Activated CD4-positive, alpha-beta memory T cell treated with anti-CD3 and anti-CD28 coated beads, Interleukin-2, amount 10 ng/mL, durations not matched to agents 7 days and 5 days (primary cell): ENCODE measurements at regions of chr12 and their contacts with region 1.

Region 1: GRCh38 chr12:810671-811415 is 58.5 kb downstream of the WNK1 start:
- DNase-seq: peak; percentile 55
- H3K4me3 Mint-ChIP-seq: peak overlapping the region; percentile 25
- H3K27ac Mint-ChIP-seq: peak overlapping the region; percentile 49
- H3K4me1 Mint-ChIP-seq: peaks cover 66% of the 10 kb centered on the region
- H3K27me3 Mint-ChIP-seq: no peaks in the 10 kb centered on the region

Region 2: DNA sequence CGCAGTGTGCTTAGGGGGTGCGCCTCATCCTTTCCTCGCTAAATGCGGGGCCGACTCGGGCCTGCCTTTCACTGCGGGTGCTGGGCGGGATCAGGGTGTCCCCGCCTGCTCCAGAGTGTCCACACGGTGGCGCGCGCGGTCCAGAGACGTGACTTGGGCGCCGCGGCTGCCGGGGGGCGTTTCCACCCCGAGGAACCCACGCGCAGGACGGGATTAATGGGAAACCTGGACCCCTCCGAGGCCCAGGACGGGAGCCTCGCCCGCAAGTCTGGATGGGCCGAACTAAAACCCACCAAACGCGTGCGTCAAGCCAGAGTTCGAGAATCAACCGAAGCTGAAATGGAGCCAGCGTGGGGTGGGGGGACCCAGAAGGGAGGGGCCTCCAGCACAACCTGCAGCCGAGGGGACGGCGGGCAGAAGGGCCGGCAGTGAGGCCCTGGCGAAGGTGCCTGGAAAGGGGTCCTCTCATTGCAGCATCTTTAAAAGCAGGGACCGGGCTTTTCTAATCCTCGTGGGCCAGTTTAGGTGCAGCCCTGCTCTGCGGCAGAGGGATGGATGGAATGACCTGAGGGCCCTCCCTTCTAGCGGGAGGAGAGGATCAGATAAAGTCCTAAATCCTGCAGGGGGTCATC is 240.9 kb before region 1 on chr12:
- CTCF ChIA-PET with region 1: interaction called, 77 read pairs
- POLR2A ChIA-PET with region 1: interaction called, 5 read pairs
- DNase-seq: peak; percentile 87
- H3K4me3 Mint-ChIP-seq: peak overlapping the region; percentile 78
- H3K27ac Mint-ChIP-seq: peak overlapping the region; percentile 10
- H3K4me1 Mint-ChIP-seq: peaks cover 78% of the 10 kb centered on the region
- H3K27me3 Mint-ChIP-seq: no peaks in the 10 kb centered on the region

Region 3: GRCh38 chr12:614411-614970 is 196.4 kb before region 1 on chr12:
- CTCF ChIA-PET with region 1: interaction called, 13 read pairs
- POLR2A ChIA-PET with region 1: interaction called, 3 read pairs
- DNase-seq: no peak
- H3K4me3 Mint-ChIP-seq: no peak overlapping the region
- H3K27ac Mint-ChIP-seq: no peak overlapping the region
- H3K4me1 Mint-ChIP-seq: peaks cover 50% of the 10 kb centered on the region
- H3K27me3 Mint-ChIP-seq: no peaks in the 10 kb centered on the region

Region 4: GRCh38 chr12:724194-724855 is 86.5 kb before region 1 on chr12:
- CTCF ChIA-PET with region 1: no interaction called
- POLR2A ChIA-PET with region 1: no interaction called
- DNase-seq: peak; percentile 30
- H3K4me3 Mint-ChIP-seq: peak overlapping the region; percentile 33
- H3K27ac Mint-ChIP-seq: peak overlapping the region; percentile 58
- H3K4me1 Mint-ChIP-seq: peaks cover 62% of the 10 kb centered on the region
- H3K27me3 Mint-ChIP-seq: no peaks in the 10 kb centered on the region

Region 5: DNA sequence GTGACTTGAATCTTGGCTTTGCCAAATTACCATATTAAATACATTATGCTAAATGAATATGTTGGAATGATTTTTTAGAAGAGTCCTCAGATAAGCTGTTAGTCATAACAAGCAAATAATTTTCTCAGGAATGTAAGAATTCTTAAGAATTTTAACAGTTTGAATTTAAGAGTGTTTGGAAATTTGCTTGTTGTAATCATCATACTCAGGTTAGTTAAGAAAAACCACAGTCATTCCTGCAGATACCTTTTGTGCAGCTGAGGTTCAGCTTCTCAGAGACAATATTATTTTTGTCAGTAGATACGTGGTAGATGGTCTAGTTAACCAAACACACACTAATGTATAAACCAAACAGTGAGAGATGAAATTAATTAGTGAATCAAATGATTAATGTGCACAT is 49.6 kb before region 1 on chr12:
- CTCF ChIA-PET with region 1: interaction called, 13 read pairs
- POLR2A ChIA-PET with region 1: interaction called, 3 read pairs
- DNase-seq: no peak
- H3K4me3 Mint-ChIP-seq: no peak overlapping the region
- H3K27ac Mint-ChIP-seq: no peak overlapping the region
- H3K4me1 Mint-ChIP-seq: peaks cover 59% of the 10 kb centered on the region
- H3K27me3 Mint-ChIP-seq: no peaks in the 10 kb centered on the region

Region 6: GRCh38 chr12:779745-780734 is 30.8 kb before region 1 on chr12:
- CTCF ChIA-PET with region 1: interaction called, 11 read pairs
- POLR2A ChIA-PET with region 1: interaction called, 3 read pairs
- DNase-seq: no peak
- H3K4me3 Mint-ChIP-seq: peak overlapping the region; percentile 65
- H3K27ac Mint-ChIP-seq: peak overlapping the region; percentile 41
- H3K4me1 Mint-ChIP-seq: peaks cover 61% of the 10 kb centered on the region
- H3K27me3 Mint-ChIP-seq: no peaks in the 10 kb centered on the region

Region 7: DNA sequence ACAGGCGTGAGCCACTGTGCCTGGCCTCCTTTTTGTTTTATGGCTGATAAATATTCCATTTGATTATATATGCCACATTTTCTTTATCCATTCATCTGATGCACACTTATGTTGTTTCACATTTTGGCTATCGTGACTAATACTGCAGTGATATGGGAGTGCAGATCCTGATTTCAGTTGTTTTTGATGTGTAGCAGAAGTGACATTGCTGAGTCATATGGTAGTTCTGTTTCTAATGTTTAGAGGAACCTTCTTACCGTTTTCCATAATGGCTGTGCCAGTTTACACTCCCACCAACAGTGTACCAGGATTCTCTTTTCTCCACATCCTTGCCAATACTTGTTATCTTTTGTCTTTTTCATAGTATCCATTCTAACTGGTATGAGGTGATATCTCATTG is 416.1 kb after region 1 on chr12:
- CTCF ChIA-PET with region 1: no interaction called
- POLR2A ChIA-PET with region 1: no interaction called
- DNase-seq: no peak
- H3K4me3 Mint-ChIP-seq: no peak overlapping the region
- H3K27ac Mint-ChIP-seq: no peak overlapping the region
- H3K4me1 Mint-ChIP-seq: peaks cover 19% of the 10 kb centered on the region
- H3K27me3 Mint-ChIP-seq: peaks cover 12% of the 10 kb centered on the region